ENCODE measurements at regions of chr9 and their contacts with region 1.

Region 1: DNA sequence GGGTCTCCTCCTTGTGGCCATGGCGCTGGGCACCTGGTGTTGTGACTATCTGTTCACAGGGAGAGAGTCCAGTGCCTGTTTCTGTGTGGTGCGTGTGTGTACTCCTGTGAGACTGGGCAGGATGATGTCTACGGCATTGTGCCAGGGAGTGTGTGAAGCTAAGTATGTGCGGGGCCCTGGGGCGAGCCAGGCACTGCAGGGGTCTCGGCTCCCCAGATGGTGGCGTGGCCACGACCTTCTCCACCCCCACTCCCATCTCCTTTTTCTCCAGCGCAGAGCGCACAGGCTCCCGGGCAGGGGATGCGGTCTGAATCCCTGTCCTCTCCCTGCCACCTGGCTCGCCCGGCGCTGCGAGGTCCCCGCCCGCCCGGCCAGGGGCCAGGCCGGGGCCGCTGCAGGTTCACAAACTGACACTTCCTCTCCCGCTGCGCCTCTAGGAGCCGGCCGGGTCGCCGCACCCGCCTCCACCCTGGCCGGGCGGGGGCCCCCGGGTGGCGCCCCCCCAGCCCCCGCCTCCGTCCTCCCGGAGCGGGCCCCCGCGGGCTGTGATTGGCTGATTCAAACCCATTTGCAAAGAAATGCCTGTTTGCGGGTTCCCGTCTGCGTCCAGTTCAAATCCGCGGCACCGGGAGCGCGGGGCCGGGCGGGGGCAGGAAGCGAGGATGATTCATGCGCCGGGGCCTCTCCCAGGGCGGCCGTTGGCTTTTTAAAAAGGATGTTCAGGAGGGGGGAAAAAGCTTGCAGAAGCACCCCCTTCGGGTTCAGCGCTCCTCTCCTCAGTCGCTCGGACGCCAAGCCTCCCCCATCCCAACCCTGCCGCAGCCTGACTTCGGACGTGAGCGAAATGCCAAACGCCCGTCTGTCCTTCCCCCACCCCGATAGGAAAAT is 790 bp downstream of the PHF19 start:
- DNase-seq: peak; percentile 86
- H3K4me3 Mint-ChIP-seq: peak overlapping the region; percentile 89
- H3K27ac Mint-ChIP-seq: peak overlapping the region; percentile 97
- H3K4me1 Mint-ChIP-seq: peaks cover 75% of the 10 kb centered on the region
- H3K27me3 Mint-ChIP-seq: no peaks in the 10 kb centered on the region

Region 2: GRCh38 chr9:120862452-120862851 is 13.7 kb before region 1 on chr9:
- intact Hi-C with region 1: no loop called
- DNase-seq: no peak
- H3K4me3 Mint-ChIP-seq: no peak overlapping the region
- H3K27ac Mint-ChIP-seq: no peak overlapping the region
- H3K4me1 Mint-ChIP-seq: peaks cover 8% of the 10 kb centered on the region
- H3K27me3 Mint-ChIP-seq: no peaks in the 10 kb centered on the region

Region 3: GRCh38 chr9:120892748-120893610 is 16.8 kb after region 1 on chr9:
- intact Hi-C with region 1: loop called (anchors 1 kb)
- DNase-seq: peak; percentile 62
- H3K4me3 Mint-ChIP-seq: peak overlapping the region; percentile 69
- H3K27ac Mint-ChIP-seq: peak overlapping the region; percentile 99
- H3K4me1 Mint-ChIP-seq: peaks cover 74% of the 10 kb centered on the region
- H3K27me3 Mint-ChIP-seq: no peaks in the 10 kb centered on the region

Region 4: DNA sequence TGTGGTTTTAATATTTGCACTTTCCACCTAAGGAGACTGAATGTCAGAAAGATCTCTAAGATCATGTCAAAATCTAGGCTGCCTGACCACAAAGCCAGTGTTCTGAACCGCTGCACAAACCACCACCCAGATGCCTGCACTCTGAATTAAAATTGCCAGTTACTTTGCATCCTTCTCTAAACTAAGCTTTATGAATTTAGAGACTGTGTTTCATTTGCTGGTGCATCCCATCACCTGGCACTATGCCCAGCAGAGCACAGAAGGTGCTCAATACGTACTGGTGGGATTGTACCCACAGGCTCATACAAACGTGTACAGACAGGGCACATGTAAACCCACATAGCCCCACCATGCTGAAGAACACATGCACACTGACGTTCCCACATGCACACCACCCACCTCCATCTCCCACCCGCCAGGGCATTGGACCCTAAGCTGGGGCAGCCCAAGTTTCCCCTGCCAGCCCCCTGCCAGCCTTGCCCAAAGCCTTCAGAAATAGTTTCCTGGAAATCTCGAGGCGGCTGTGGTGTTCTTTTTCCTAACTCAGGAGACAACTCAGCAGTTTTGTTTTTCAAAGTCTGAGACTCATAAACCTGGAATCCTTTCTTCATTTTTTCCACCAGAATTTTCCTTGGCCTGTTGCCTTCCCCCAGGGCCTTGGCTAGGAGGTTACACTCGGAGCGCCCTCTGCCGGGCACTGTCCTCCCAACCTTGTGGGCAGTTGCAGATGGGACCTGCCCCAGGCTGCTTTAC is 60.0 kb after region 1 on chr9:
- intact Hi-C with region 1: loop called (anchors 1 kb)
- DNase-seq: peak; percentile 77
- H3K4me3 Mint-ChIP-seq: peak overlapping the region; percentile 59
- H3K27ac Mint-ChIP-seq: peak overlapping the region; percentile 90
- H3K4me1 Mint-ChIP-seq: peaks cover 58% of the 10 kb centered on the region
- H3K27me3 Mint-ChIP-seq: peaks cover 3% of the 10 kb centered on the region

Region 5: GRCh38 chr9:121074635-121075385 is 198.6 kb after region 1 on chr9 and contains the start of gene CNTRL:
- intact Hi-C with region 1: loop called (anchors 2 kb)
- DNase-seq: peak; percentile 90
- H3K4me3 Mint-ChIP-seq: peak within 1 kb of the TSS; percentile 100
- H3K27ac Mint-ChIP-seq: peak within 1 kb of the TSS; percentile 91
- H3K4me1 Mint-ChIP-seq: peaks cover 57% of the 10 kb centered on the region
- H3K27me3 Mint-ChIP-seq: no peaks in the 10 kb centered on the region
- total RNA-seq, gene CNTRL: 69.9 and 74.2 TPM in 2 replicates

Region 6: DNA sequence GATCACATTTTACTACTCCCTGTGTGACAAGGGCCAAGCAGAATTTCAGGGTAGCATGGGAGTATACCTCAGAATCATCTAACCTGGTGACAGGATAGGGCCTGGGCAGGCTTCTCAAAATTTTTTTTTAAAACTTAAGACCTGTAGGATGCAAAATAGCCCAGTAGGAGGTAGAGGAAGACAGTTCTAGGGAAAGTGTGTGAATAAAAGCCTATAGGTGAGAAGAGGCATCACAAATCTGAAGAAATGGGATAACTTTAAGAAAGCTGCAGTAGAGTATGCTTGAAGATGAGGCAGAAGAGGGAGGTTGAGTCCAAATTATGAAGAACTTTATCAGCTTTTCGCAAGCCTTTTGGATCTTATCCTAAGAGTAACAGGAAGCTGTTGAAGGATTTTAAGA is 230.8 kb after region 1 on chr9:
- intact Hi-C with region 1: no loop called
- DNase-seq: no peak
- H3K4me3 Mint-ChIP-seq: no peak overlapping the region
- H3K27ac Mint-ChIP-seq: no peak overlapping the region
- H3K4me1 Mint-ChIP-seq: peaks cover 22% of the 10 kb centered on the region
- H3K27me3 Mint-ChIP-seq: no peaks in the 10 kb centered on the region

Measured in activated T-helper 1 cell treated with anti-CD3 and anti-CD28 coated beads, Interleukin-12 subunit alpha, Interleukin-12 subunit beta, Interleukin-2, Interleukin-4 antibody, amounts not matched to agents 30 ng/mL and 10 ng/mL and 1 ng/mL, durations not matched to agents 14 hours and 24 hours and 36 hours (primary cell).